ENCODE measurements at regions of chr12 and their contacts with region 1.

Region 1: GRCh38 chr12:100163416-100164152 is 20.9 kb upstream of the BLTP3B start:
- DNase-seq: peak; percentile 92

Region 2: DNA sequence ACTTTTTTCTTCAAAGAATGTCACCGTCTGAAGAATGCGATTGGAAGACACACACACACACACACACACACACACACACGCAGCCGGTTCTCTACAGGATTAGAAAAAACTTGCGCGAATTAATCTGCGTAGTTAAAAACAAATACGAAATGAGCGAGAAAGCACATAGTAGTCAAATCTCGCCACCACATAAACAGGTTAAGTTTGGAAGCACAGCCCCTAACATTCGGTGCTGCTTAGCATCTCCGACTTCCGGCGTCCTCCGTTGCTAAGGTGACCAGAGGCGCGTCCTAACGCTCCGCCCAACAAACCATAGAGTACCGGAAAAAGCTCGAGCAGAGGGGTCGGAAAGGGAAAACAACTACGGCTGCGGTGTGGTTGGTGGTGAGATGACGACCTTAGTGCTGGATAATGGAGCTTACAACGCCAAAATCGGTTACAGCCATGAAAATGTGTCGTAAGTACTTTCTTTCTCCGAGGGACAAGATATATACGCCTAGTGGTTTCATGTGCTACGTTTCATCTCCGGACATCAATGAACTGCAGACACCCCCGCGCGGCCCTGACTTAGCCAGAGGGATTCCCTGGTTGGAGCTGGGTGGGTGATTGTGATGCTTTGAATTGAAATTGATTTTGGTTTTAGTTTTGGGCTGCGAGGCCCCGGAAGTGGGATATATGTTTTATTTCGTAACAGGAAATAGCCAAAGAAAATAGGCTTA is 37.0 kb after region 1 on chr12 and contains the start of gene ACTR6:
- intact Hi-C with region 1: loop called (anchors 5 kb)
- DNase-seq: peak; percentile 98
- total RNA-seq, gene ACTR6: 18.6 TPM